ENCODE measurements at regions of chr20 and their contacts with region 1.

Region 1: GRCh38 chr20:43975096-43975768 is 60.6 kb downstream of the TOX2 start:
- DNase-seq: no peak
- H3K4me3 ChIP-seq: no peak overlapping the region
- H3K27ac ChIP-seq: no peak overlapping the region
- H3K4me1 ChIP-seq: no peaks in the 10 kb centered on the region
- H3K27me3 ChIP-seq: no peaks in the 10 kb centered on the region
- CTCF ChIP-seq: no peak
- POLR2A ChIP-seq: no peak

Region 2: GRCh38 chr20:43636429-43636828 is 338.8 kb before region 1 on chr20:
- intact Hi-C with region 1: no loop called
- DNase-seq: no peak
- H3K4me3 ChIP-seq: no peak overlapping the region
- H3K27ac ChIP-seq: no peak overlapping the region
- H3K4me1 ChIP-seq: no peaks in the 10 kb centered on the region
- H3K27me3 ChIP-seq: no peaks in the 10 kb centered on the region
- CTCF ChIP-seq: no peak
- POLR2A ChIP-seq: no peak

Region 3: DNA sequence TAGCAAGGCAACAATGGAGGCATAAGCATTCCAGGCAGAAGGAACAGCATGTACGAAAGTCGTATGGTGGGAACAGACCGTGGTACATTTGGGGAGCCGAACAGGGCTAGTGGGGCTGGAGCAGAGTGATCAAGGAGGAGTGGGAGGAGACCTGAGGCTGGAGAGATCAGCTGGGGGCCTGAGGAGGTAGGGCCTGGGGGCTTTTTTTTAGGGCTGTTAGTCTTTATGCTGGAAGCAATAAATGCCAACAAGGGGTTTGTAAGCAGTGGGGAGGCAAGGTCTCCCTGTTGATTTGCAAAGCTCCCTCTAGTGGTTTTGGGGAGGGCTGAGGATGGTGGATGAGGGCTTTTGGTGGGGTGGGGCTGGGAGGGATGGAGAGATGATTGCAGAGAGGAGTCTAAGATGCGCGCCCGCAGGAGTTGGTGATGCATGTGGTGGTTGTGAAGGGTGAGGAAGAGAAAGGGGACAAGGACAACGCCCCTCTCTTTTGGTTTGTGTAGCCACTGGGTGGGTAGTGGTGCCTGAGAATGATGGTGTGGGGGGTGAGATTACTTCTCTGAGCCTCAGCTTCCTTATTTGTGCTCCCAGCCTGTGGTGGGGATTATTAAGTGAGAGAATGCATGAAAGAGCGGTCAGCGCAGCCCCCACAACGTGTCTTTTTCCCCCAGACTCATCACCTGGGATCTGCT is 134.7 kb before region 1 on chr20:
- intact Hi-C with region 1: no loop called
- DNase-seq: no peak
- H3K4me3 ChIP-seq: no peak overlapping the region
- H3K27ac ChIP-seq: no peak overlapping the region
- H3K4me1 ChIP-seq: no peaks in the 10 kb centered on the region
- H3K27me3 ChIP-seq: no peaks in the 10 kb centered on the region
- CTCF ChIP-seq: peak in 1 of 6 experiments; percentile 16
- POLR2A ChIP-seq: no peak

Region 4: GRCh38 chr20:43914311-43915210 is 60.7 kb before region 1 on chr20 and contains the start of gene TOX2:
- intact Hi-C with region 1: loop called (anchors 10 kb)
- DNase-seq: peak; percentile 17 to 22
- H3K4me3 ChIP-seq: peak within 1 kb of the TSS in 1 of 3 donors; percentile 27
- H3K27ac ChIP-seq: peak within 1 kb of the TSS in 1 of 3 donors; percentile 58
- H3K4me1 ChIP-seq: peaks cover 6 to 15% of the 10 kb centered on the region in 2 donors
- H3K27me3 ChIP-seq: peaks cover 14% of the 10 kb centered on the region
- CTCF ChIP-seq: no peak
- POLR2A ChIP-seq: no peak
- total RNA-seq, gene TOX2: 3.4 to 7.7 (median 5.2) TPM

Region 5: DNA sequence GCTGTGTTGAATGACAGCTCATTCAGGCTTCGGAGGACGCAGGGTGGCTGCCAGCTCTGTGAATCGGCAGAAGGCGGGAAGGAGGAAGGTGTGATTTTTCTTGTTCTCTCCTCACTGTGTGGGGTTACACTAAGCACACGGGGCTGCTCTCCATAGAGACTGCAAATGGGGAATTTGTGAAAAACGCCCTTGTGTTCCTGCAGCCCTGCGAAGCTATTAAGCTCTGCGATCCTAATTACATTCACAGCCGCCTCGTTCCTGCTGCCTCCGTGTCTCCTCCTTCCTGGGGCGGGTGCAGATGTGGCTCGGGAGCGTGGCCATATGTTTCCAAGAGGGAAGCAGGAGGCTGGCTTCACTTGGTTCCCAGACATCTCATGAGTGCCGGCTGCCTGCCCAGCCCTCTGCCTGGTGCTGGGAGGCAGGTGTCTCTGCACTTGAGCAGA is 63.5 kb after region 1 on chr20:
- intact Hi-C with region 1: no loop called
- DNase-seq: no peak
- H3K4me3 ChIP-seq: no peak overlapping the region
- H3K27ac ChIP-seq: no peak overlapping the region
- H3K4me1 ChIP-seq: no peaks in the 10 kb centered on the region
- H3K27me3 ChIP-seq: no peaks in the 10 kb centered on the region
- CTCF ChIP-seq: no peak
- POLR2A ChIP-seq: no peak

Region 6: DNA sequence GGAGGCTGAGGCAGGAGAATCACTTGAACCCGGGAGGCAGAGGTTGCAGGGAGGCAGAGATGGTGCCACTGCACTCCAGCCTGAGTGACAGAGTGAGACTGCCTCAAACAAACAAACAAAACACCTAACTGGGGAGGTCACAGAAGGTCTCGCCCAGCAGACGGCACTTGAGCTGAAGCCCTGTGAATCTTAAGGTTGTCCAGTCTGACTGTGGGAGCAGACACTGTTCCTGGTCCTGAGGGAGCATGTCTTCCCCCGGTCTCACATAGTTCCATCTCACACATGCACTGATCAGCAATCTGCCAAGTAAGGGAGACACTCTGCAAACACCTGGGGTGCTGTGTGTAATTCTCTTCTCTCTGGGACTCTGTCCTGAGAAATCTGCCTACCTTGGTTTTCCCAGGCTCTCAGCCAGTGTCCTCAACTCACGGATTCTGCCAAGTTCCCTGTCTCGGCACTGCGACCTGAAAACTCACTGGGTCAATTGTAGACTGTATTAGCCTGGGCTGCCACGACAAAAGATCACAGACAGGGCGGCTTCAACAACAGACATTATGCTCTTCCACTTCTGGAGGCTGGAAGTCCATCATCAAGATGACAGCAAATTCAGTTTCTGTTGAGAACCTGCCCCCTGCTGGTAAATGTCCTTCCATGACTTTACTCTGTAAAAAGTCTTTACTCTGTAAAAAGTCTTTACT is 117.5 kb after region 1 on chr20:
- intact Hi-C with region 1: no loop called
- DNase-seq: no peak
- H3K4me3 ChIP-seq: no peak overlapping the region
- H3K27ac ChIP-seq: no peak overlapping the region
- H3K4me1 ChIP-seq: no peaks in the 10 kb centered on the region
- H3K27me3 ChIP-seq: no peaks in the 10 kb centered on the region
- CTCF ChIP-seq: peak in 1 of 6 experiments; percentile 37
- POLR2A ChIP-seq: no peak